Cardiac septum (tissue), 1 donor: ENCODE measurements at regions of chr2 and their contacts with region 1.

Region 1: DNA sequence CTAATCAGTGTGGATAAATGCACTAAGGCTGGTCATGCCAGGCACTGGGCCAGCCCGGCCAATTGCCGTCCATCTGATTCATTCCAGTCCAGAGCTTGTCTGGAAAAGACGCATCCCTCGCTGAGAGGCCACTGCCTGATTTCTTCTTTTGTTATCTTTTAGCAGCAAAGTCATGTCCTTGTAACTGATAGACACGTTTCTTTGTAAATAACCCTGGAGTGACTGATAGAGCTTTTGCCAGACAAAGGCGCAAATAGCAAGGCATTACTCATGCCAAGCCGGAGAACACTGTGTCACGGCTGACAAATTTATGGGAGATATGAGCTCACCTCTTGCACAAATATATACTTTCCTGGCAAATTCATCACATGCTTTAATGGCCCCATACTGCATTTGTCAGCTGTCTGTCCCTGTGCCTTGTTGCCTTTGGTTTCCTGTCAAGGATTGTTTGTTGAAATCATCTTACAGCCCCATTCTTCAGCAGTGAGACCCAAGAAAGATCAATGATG is 164.4 kb downstream of the ETAA1 start:
- DNase-seq: peak; percentile 77

Region 2: GRCh38 chr2:67437174-67437573 is 124.3 kb before region 1 on chr2:
- intact Hi-C with region 1: no loop called
- DNase-seq: no peak

Region 3: GRCh38 chr2:67451086-67451832 is 110.3 kb before region 1 on chr2:
- intact Hi-C with region 1: loop called (anchors 5 kb)
- DNase-seq: no peak

Region 4: GRCh38 chr2:67600946-67601345 is 39.4 kb after region 1 on chr2:
- intact Hi-C with region 1: no loop called
- DNase-seq: no peak